Mammary epithelial cell (primary cell): ENCODE measurements at regions of chr20 and their contacts with region 1.

Region 1: DNA sequence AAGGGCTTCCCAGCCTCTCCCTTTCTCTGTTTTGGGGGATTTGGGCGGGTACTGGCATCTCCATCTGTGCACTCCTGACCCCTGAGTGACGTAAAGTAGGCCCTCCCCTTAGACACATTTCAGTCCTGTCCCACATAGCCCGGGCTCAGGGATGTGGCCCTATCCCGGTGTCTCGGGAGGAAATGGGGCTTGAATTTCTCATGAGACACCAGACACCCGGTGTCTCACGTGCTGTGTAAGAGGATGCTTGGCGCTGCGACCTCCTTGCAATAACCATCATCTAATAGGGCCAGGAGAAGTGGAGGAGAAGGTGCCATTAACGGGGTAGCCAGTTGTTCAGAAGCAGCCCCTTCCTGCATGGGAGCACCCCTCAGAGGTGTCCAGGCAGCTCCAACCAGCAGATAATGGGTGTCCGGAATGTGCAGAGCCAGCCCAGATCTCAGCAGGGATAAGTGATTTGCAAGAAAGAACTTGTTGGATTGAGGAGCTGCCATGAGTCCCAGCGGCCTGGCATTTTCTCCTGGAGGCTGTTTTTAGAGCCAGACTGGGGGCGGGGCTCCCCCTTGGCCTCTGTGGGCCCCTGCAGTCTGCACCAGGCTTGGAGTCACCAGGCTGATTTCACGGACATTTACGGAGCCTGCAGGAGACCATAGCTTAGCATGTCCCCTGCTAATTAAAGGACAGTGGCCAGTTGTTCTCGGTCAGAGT is 372.0 kb downstream of the PREX1 start:
- DNase-seq: peak; percentile 31
- H3K4me3 ChIP-seq: no peak overlapping the region
- H3K27ac ChIP-seq: no peak overlapping the region
- H3K4me1 ChIP-seq: no peaks in the 10 kb centered on the region
- H3K27me3 ChIP-seq: no peaks in the 10 kb centered on the region
- CTCF ChIP-seq: no peak

Region 2: GRCh38 chr20:48383846-48384673 is 71.7 kb before region 1 on chr20:
- CTCF ChIA-PET with region 1: no interaction called
- dilution Hi-C with region 1: loop called (anchors 5 kb)
- in situ Hi-C with region 1: no loop called
- intact Hi-C with region 1: no loop called
- DNase-seq: no peak
- H3K4me3 ChIP-seq: no peak overlapping the region
- H3K27ac ChIP-seq: no peak overlapping the region
- H3K4me1 ChIP-seq: no peaks in the 10 kb centered on the region
- H3K27me3 ChIP-seq: no peaks in the 10 kb centered on the region
- CTCF ChIP-seq: no peak